Activated CD4-positive, alpha-beta memory T cell treated with anti-CD3 and anti-CD28 coated beads for 36 hours (primary cell): ENCODE measurements at regions of chr1 and their contacts with region 1.

Region 1: DNA sequence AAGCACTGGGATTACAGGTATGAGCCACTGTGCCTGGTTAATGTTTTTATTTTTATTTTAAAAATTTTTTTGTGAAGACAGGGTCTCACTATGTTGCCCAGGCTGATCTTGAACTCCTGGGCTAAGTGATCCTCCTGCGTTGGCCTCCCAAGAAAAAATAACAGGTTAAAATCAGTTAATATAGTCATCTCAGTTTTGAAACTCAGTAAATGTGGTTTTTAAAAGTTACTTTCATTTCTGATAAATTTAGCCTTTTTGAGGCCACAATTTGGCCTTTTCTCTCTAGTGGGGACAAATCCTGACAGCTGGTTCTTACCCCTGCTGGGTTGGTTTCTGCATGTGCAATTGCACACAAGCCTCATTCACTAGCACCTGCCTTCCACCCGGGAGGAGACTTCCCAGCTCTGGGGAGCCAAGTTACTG is 13.3 kb downstream of the PMF1 start:
- DNase-seq: peak; percentile 61
- H3K4me3 Mint-ChIP-seq: no peak overlapping the region
- H3K27ac Mint-ChIP-seq: peak overlapping the region; percentile 91
- H3K4me1 Mint-ChIP-seq: peaks cover 54% of the 10 kb centered on the region
- H3K27me3 Mint-ChIP-seq: no peaks in the 10 kb centered on the region

Region 2: GRCh38 chr1:155744711-155745283 is 481.3 kb before region 1 on chr1:
- CTCF ChIA-PET with region 1: no interaction called
- POLR2A ChIA-PET with region 1: no interaction called
- intact Hi-C with region 1: no loop called
- DNase-seq: no peak
- H3K4me3 Mint-ChIP-seq: peak overlapping the region; percentile 90
- H3K27ac Mint-ChIP-seq: peak overlapping the region; percentile 83
- H3K4me1 Mint-ChIP-seq: peaks cover 3% of the 10 kb centered on the region
- H3K27me3 Mint-ChIP-seq: no peaks in the 10 kb centered on the region

Region 3: DNA sequence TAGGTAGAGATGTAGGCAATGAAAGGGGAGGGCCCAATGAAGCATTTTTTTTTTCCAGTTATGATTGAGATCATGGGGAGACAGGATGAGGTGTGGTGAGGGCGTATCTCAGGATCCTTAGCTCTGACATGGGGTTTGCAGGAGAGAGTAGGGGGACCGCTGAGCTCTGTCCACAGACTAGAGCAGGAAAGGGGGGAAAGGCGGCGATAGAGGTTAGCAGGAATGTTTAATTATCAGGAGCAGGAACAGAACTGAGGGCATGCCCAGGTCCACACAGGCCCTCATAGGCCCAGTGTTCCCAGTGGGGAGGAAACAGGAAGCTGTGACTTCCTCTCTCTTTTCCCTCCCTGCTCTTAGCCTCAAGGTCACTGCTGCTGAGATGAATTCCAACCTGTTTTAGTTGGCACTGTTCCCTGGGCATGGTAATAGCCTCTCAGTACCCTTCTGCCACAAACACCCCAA is 285.6 kb before region 1 on chr1:
- CTCF ChIA-PET with region 1: no interaction called
- POLR2A ChIA-PET with region 1: no interaction called
- intact Hi-C with region 1: loop called (anchors 10 kb)
- DNase-seq: peak; percentile 16
- H3K4me3 Mint-ChIP-seq: no peak overlapping the region
- H3K27ac Mint-ChIP-seq: peak overlapping the region; percentile 68
- H3K4me1 Mint-ChIP-seq: peaks cover 55% of the 10 kb centered on the region
- H3K27me3 Mint-ChIP-seq: no peaks in the 10 kb centered on the region

Region 4: DNA sequence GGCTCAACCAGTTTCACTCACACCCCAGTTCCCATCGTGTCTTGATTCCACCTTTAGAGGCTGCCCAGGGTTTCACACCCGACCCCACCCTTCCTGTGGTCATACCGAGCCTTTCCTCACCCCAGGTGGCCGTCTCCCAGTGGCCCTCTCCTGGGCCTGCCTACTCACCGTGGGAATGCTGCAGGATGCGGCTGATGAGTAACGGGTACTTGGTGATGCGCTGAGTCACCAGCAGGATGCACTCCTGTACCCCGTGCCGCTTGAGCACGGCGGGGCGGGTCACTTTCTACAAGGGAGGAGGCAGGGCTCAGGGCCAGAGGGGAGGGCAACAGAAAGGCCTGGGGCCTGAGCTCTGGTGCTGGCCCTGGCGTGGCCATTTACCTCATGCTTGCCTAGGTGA is 264.2 kb before region 1 on chr1:
- CTCF ChIA-PET with region 1: no interaction called
- POLR2A ChIA-PET with region 1: no interaction called
- intact Hi-C with region 1: no loop called
- DNase-seq: peak; percentile 47
- H3K4me3 Mint-ChIP-seq: no peak overlapping the region
- H3K27ac Mint-ChIP-seq: peak overlapping the region; percentile 75
- H3K4me1 Mint-ChIP-seq: peaks cover 14% of the 10 kb centered on the region
- H3K27me3 Mint-ChIP-seq: no peaks in the 10 kb centered on the region

Region 5: DNA sequence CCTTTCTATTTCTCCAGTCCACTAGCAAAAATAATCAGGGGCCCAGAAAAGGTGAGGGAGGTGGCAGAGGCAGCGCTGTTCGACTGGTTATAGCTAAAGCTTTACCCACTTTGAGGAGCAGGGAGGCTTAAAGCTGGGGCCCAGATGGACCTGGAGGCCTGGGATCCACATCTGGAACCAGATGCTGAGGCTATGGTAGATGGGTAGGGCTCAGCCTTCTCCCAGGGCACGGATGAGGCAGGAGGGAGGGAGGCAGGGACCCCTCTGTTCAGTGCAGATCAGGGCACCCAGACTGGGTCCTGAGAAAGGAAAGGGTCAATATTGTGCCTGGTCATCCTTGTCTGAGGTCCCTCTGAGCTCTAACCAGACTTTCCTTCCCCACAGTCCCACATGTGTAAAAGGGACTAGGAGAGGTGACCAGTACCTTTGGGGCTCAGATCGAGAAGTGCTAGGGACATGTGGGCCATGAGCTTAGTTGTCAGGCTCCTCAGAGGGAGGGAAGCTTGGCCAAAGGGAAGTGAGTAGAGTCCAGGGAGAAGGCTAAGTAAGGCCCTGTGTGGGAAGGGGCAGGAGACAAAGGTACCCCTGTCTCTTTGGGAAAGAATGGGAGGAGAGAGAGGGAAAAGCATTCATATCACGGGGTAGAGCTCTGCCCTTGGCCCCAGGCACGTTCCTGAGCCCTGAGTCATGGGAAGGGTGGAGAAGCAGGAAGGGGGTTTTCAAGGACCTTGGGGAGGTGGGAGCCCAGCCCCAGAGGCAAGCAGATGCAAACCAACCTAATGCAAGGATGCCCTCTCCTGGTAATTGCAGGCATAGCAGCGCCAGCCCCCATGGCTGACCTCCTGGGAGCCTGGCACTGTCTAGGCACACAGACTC is 96.2 kb before region 1 on chr1:
- CTCF ChIA-PET with region 1: interaction called, 66 read pairs
- POLR2A ChIA-PET with region 1: interaction called, 7 read pairs
- intact Hi-C with region 1: loop called (anchors 1 kb)
- DNase-seq: peak; percentile 89
- H3K4me3 Mint-ChIP-seq: no peak overlapping the region
- H3K27ac Mint-ChIP-seq: peak overlapping the region; percentile 50
- H3K4me1 Mint-ChIP-seq: peaks cover 52% of the 10 kb centered on the region
- H3K27me3 Mint-ChIP-seq: no peaks in the 10 kb centered on the region

Region 6: DNA sequence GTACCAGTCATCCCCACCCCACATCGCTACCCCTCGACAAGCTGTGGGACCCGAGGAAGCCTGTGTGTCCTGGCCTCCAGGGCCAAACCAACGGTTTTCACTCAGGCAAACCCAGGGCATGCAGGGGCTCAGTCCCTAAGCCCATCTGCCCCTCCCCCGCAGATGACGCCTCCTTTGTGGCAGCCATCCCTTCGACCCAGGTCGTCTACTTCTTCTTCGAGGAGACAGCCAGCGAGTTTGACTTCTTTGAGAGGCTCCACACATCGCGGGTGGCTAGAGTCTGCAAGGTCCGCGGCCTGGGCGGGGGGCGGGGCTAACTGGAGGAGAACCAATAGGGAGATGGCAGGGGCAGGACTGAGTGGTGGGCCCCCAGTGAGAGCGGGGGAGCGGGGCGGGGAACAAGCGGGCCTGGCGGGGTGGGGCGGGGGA is 65.4 kb before region 1 on chr1:
- CTCF ChIA-PET with region 1: interaction called, 310 read pairs
- POLR2A ChIA-PET with region 1: interaction called, 17 read pairs
- intact Hi-C with region 1: loop called (anchors 1 kb)
- DNase-seq: peak; percentile 90
- H3K4me3 Mint-ChIP-seq: peak overlapping the region; percentile 74
- H3K27ac Mint-ChIP-seq: peak overlapping the region; percentile 93
- H3K4me1 Mint-ChIP-seq: peaks cover 82% of the 10 kb centered on the region
- H3K27me3 Mint-ChIP-seq: no peaks in the 10 kb centered on the region

Region 7: DNA sequence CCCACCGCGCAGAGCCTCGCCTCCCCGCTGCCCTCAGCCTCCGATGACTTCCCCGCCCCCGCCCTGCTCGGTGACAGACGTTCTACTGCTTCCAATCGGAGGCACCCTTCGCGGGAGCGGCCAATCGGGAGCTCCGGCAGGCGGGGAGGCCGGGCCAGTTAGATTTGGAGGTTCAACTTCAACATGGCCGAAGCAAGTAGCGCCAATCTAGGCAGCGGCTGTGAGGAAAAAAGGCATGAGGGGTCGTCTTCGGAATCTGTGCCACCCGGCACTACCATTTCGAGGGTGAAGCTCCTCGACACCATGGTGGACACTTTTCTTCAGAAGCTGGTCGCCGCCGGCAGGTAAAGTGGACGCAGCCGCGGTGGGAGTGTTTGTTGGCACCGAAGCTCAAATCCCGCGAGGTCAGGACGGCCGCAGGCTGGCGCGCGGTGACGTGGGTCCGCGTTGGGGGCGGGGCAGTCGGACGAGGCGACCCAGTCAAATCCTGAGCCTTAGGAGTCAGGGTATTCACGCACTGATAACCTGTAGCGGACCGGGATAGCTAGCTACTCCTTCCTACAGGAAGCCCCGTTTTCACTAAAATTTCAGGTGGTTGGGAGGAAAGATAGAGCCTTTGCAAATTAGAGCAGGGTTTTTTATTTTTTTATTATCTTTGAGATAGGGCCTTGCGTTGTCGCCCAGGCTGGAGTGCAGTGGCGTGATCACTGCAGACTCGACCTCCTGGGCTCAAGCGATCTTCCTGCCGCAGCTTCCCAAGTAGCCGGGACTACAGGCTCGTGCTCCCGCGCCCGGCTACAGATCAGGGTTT is 13.1 kb before region 1 on chr1 and contains the start of gene PMF1:
- CTCF ChIA-PET with region 1: interaction called, 78 read pairs
- POLR2A ChIA-PET with region 1: interaction called, 85 read pairs
- intact Hi-C with region 1: loop called (anchors 1 kb)
- DNase-seq: peak; percentile 98
- H3K4me3 Mint-ChIP-seq: peak within 1 kb of the TSS; percentile 76
- H3K27ac Mint-ChIP-seq: peak within 1 kb of the TSS; percentile 96
- H3K4me1 Mint-ChIP-seq: peaks cover 40% of the 10 kb centered on the region
- H3K27me3 Mint-ChIP-seq: no peaks in the 10 kb centered on the region
- total RNA-seq, gene PMF1: 99.5 to 105 TPM

Region 8: DNA sequence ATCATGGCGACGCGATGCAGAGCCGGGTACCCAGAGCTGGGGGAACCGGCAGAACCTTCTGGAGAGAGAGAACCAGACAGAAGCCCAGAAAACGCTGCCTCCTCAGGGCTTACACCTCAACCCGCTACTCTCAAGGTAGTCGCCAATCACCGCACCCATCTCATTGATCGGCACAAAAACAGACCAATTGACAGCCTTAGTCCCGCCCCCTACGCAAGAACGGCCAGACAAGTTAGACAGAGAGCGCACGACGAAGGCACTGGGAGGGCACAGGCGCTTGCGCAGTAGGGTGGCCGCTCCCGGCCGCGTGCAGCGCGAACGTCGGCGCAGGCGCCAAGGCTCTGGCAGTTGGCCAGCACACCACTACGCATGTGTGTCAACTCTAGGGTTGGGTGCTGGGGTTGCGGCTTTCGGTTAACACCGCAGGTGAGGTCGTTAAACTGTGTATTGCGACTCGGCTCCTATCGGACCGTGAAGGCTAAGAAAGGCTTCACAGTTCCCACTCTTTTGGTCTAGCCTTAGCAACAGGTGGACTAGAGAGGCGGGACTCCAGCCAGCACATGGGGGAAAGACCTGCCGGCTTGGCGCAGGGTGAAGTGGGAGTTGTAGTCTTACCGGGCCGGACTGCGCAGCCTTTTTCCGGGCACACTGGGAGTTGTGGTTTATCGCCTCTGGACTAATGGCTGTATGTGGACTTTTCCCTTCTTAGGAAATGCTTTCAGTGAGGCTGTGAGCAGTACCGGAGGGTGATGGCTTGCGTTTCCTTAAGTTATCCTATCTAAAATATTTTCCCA is 112.2 kb after region 1 on chr1 and contains the starts of genes CCT3 and TSACC:
- CTCF ChIA-PET with region 1: interaction called, 3 read pairs
- POLR2A ChIA-PET with region 1: no interaction called
- intact Hi-C with region 1: loop called (anchors 5 kb)
- DNase-seq: peak; percentile 99
- H3K4me3 Mint-ChIP-seq: peak within 1 kb of the TSS; percentile 90
- H3K27ac Mint-ChIP-seq: peak within 1 kb of the TSS; percentile 95
- H3K4me1 Mint-ChIP-seq: peaks cover 27% of the 10 kb centered on the region
- H3K27me3 Mint-ChIP-seq: no peaks in the 10 kb centered on the region
- total RNA-seq, gene CCT3: 344 to 356 TPM
- total RNA-seq, gene TSACC: not detected

Region 9: GRCh38 chr1:157233131-157233530 is 1007.0 kb after region 1 on chr1:
- CTCF ChIA-PET with region 1: no interaction called
- POLR2A ChIA-PET with region 1: no interaction called
- intact Hi-C with region 1: no loop called
- DNase-seq: no peak
- H3K4me3 Mint-ChIP-seq: no peak overlapping the region
- H3K27ac Mint-ChIP-seq: no peak overlapping the region
- H3K4me1 Mint-ChIP-seq: no peaks in the 10 kb centered on the region
- H3K27me3 Mint-ChIP-seq: peaks cover 8% of the 10 kb centered on the region